ENCODE measurements at regions of chr17 and their contacts with region 1.

Region 1: GRCh38 chr17:64129764-64130558 is at the start of gene ERN1:
- DNase-seq: peak; percentile 95
- H3K4me3 ChIP-seq: peak within 1 kb of the TSS; percentile 78 to 90
- H3K27ac ChIP-seq: peak within 1 kb of the TSS; percentile 93 to 94
- H3K4me1 ChIP-seq: peaks cover 4% of the 10 kb centered on the region
- H3K27me3 ChIP-seq: no peaks in the 10 kb centered on the region
- CTCF ChIP-seq: peak in 2 of 4 experiments; percentile 8 to 11
- POLR2A ChIP-seq: peak; percentile 94
- total RNA-seq, gene ERN1: 14.4 to 21.4 TPM

Region 2: GRCh38 chr17:64025732-64026294 is 104.1 kb before region 1 on chr17:
- intact Hi-C with region 1: loop called (anchors 2 kb)
- DNase-seq: peak; percentile 45
- H3K4me3 ChIP-seq: no peak overlapping the region
- H3K27ac ChIP-seq: no peak overlapping the region
- H3K4me1 ChIP-seq: no peaks in the 10 kb centered on the region
- H3K27me3 ChIP-seq: no peaks in the 10 kb centered on the region
- CTCF ChIP-seq: peak; percentile 64 to 83 (median 76)
- POLR2A ChIP-seq: no peak

Region 3: GRCh38 chr17:64063766-64064224 is 66.2 kb before region 1 on chr17:
- intact Hi-C with region 1: loop called (anchors 2 kb)
- DNase-seq: peak; percentile 78
- H3K4me3 ChIP-seq: no peak overlapping the region
- H3K27ac ChIP-seq: peak overlapping the region; percentile 63 to 71
- H3K4me1 ChIP-seq: peaks cover 7% of the 10 kb centered on the region
- H3K27me3 ChIP-seq: no peaks in the 10 kb centered on the region
- CTCF ChIP-seq: peak; percentile 53 to 89 (median 84)
- POLR2A ChIP-seq: no peak

Region 4: DNA sequence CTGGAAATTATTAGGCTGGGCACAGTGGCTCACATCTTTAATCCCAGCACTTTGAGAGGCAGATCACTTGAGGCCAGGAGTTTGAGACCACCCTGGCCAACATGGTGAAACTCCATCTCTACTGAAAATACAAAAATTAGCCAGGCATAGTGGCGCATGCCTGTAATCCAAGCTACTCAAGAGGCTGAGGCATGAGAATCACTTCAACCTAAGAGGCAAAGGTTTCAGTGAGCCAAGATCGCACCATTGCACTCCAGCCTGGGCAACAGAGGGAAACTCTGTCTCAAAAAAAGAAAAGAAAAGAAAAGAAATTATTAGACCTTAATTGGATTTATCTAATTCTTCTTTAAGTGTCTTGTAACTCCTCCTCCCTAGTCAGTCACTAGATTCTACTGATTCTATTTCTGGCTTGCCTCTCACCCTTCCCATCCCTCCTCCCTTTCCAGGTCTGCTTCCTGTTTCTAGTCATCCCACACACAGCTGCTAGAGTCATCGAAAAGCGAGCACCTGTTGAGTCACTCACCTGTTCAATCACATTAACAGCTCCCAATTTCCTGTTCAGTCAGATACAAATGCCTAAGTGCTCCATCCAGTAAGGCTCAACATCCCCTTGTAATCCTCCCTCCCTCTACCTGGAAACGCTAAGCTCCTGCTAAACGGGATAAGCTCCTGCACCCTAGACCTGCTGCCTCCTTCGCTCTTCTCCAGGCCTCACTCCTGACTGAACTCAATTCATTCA is 34.6 kb before region 1 on chr17:
- intact Hi-C with region 1: no loop called
- DNase-seq: no peak
- H3K4me3 ChIP-seq: no peak overlapping the region
- H3K27ac ChIP-seq: no peak overlapping the region
- H3K4me1 ChIP-seq: no peaks in the 10 kb centered on the region
- H3K27me3 ChIP-seq: no peaks in the 10 kb centered on the region
- CTCF ChIP-seq: no peak
- POLR2A ChIP-seq: no peak